Activated CD4-positive, alpha-beta T cell treated with anti-CD3 and anti-CD28 coated beads, Interleukin-2, amount 10 ng/mL, durations not matched to agents 24 days and 14 days (primary cell): ENCODE measurements at regions of chr1 and their contacts with region 1.

Region 1: DNA sequence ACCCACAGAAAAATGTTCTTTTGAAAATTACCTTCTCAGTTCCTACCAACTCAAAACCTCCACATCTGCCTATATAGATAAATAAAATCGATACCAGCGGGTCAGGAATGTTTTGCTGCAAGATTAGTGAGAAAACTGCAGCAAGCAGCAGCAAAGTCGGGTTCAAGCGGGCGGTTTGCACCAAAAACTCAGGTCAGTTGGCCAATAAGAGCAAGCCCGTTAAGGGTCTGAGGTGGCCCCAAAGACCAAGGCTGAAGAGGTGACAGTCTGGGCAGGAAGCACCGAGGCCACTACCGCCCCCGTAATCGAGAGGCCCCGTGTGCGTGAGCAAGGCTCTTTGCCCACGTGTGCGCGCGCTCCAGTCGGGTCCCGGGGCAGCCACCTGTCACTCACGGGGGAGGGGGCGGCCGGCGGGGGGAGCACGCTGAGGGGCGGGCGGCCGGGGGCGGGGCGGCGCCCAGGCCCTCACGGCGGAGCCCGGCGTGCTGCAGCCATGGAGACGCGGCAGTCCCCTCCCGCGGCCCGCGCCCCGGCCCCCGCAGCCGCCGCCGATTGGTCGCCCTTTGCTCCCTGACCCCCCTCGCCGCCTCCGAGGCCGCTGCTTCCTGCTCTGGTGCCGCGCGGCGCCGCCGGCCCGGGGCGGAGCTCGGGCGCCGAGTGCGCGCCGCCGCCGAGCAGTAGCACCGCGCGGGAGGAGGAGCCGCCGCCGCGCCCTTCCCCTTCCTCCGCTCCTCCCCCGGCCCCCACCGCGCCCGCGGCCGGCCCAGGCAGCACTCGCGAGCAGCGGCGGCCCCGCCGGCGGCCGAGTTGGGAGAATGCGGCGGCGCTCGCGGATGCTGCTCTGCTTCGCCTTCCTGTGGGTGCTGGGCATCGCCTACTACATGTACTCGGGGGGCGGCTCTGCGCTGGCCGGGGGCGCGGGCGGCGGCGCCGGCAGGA is at the start of gene GALNT2:
- DNase-seq: peak; percentile 97
- H3K4me3 Mint-ChIP-seq: peak within 1 kb of the TSS; percentile 94
- H3K27ac Mint-ChIP-seq: peak within 1 kb of the TSS; percentile 95
- H3K4me1 Mint-ChIP-seq: peaks cover 37% of the 10 kb centered on the region
- H3K27me3 Mint-ChIP-seq: peaks cover 4% of the 10 kb centered on the region
- total RNA-seq, gene GALNT2: 68.5 and 72.4 TPM in 2 replicates

Region 2: DNA sequence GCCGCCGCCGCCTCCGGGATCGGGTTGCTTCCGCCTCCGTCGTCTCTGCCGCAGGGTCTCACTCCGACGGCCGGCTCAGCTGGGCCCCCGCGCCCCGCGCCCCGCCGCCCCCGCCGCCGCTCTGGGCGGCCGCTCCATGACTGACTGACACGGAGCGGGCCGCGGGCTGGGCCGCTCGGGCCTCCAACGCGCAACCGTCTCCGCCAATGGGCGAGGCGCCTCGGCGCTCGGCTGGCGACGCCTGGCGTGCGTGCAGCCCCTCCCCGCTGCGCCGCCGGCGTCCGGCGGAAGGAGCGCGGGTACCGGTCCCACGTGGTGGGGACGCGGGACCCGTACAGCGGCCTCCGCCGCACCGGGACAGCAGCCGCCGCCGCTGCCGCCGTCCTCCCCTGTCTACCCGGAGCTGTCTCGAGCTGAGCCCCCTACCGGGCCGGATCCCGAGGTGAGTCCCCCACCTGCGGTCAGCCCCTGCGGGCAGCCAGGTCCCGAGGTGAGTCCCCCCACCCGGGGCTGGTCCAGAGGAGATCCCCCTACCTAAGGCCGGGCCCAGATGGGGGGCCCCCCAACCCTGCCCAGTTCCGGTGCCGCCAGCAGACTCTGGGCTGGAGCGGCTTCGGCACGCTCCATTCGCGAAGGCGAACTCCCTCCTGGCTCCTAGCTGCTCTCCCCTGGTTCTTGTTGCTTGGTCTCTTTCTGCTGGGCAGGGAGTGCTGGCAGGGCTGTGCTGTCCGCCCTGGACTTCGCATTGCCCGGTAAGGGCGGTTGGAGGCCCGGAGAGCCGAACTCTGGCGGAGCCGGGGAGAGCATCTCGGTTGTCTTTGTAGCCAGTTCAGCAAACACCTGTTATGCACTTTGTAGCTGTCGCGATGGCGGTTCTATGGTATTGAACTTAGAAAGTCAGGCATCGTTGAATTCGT is 440.6 kb before region 1 on chr1 and contains the starts of genes TAF5L and URB2:
- intact Hi-C with region 1: loop called (anchors 1 kb)
- DNase-seq: peak; percentile 97
- H3K4me3 Mint-ChIP-seq: peak within 1 kb of the TSS; percentile 99
- H3K27ac Mint-ChIP-seq: peak within 1 kb of the TSS; percentile 96
- H3K4me1 Mint-ChIP-seq: peaks cover 49% of the 10 kb centered on the region
- H3K27me3 Mint-ChIP-seq: no peaks in the 10 kb centered on the region
- total RNA-seq, gene TAF5L: 29.7 and 30.7 TPM in 2 replicates
- total RNA-seq, gene URB2: 35.8 and 37.1 TPM in 2 replicates

Region 3: DNA sequence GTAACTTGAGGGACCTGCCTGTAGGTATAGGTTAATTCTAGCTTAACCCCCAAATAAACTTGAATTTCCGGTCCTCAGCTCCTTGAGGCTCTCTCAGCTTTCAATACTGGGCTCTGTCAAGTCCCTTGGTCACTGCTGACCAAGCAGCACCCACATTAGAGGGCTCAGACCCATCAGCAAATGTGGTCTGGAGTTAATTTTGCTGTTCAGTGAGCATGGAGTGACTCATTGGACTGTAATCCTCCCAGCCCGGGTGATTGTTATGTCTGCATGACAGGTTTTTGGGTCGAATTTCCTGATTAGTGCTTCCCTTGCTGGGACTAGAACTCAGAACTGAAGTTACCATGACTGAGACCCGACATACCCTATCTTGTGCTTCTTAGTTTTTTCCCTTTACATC is 310.1 kb before region 1 on chr1:
- intact Hi-C with region 1: no loop called
- DNase-seq: no peak
- H3K4me3 Mint-ChIP-seq: no peak overlapping the region
- H3K27ac Mint-ChIP-seq: no peak overlapping the region
- H3K4me1 Mint-ChIP-seq: peaks cover 22% of the 10 kb centered on the region
- H3K27me3 Mint-ChIP-seq: no peaks in the 10 kb centered on the region

Region 4: GRCh38 chr1:230084138-230084880 is 17.6 kb after region 1 on chr1:
- intact Hi-C with region 1: loop called (anchors 1 kb)
- DNase-seq: peak; percentile 76
- H3K4me3 Mint-ChIP-seq: peak overlapping the region; percentile 36
- H3K27ac Mint-ChIP-seq: peak overlapping the region; percentile 76
- H3K4me1 Mint-ChIP-seq: peaks cover 63% of the 10 kb centered on the region
- H3K27me3 Mint-ChIP-seq: no peaks in the 10 kb centered on the region

Region 5: GRCh38 chr1:230127105-230128054 is 60.6 kb after region 1 on chr1:
- intact Hi-C with region 1: loop called (anchors 1 kb)
- DNase-seq: peak; percentile 88
- H3K4me3 Mint-ChIP-seq: peak overlapping the region; percentile 76
- H3K27ac Mint-ChIP-seq: peak overlapping the region; percentile 81
- H3K4me1 Mint-ChIP-seq: peaks cover 70% of the 10 kb centered on the region
- H3K27me3 Mint-ChIP-seq: no peaks in the 10 kb centered on the region

Region 6: GRCh38 chr1:230243583-230244353 is 177.0 kb after region 1 on chr1:
- intact Hi-C with region 1: loop called (anchors 1 kb)
- DNase-seq: no peak
- H3K4me3 Mint-ChIP-seq: no peak overlapping the region
- H3K27ac Mint-ChIP-seq: peak overlapping the region; percentile 68
- H3K4me1 Mint-ChIP-seq: peaks cover 40% of the 10 kb centered on the region
- H3K27me3 Mint-ChIP-seq: no peaks in the 10 kb centered on the region

Region 7: DNA sequence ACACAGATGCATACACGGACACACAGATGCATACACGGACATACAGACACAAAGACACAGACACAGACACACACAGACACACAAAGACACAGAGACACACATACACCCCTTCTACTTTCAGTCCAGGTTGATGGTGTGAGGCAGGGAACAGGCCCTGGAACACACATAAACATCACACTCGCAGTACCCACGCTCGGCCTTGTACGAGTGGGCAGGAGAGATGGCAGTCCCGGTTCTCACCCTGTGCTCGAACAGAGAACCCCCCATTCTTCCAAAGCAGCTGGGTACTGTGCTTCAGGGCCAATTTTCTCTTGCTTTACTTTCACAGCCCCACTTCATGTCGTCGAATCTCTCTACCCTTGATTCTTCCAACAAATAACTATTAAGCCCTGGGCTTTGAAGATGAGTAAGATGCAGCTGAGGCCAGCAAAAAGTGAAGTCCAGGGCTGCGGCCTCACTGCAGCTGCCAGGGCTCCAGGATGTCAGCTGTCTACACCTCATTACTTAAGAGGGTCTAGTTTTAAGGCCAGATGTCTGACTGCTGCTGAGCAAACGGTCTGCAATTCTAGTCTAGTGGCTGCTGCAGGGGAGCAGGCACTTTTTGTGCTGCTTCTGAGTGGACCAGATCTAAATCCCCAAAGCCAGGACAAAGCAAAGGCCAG is 269.3 kb after region 1 on chr1:
- intact Hi-C with region 1: no loop called
- DNase-seq: no peak
- H3K4me3 Mint-ChIP-seq: no peak overlapping the region
- H3K27ac Mint-ChIP-seq: no peak overlapping the region
- H3K4me1 Mint-ChIP-seq: no peaks in the 10 kb centered on the region
- H3K27me3 Mint-ChIP-seq: peaks cover 2% of the 10 kb centered on the region